ENCODE measurements at regions of chr11 and their contacts with region 1.

Region 1: DNA sequence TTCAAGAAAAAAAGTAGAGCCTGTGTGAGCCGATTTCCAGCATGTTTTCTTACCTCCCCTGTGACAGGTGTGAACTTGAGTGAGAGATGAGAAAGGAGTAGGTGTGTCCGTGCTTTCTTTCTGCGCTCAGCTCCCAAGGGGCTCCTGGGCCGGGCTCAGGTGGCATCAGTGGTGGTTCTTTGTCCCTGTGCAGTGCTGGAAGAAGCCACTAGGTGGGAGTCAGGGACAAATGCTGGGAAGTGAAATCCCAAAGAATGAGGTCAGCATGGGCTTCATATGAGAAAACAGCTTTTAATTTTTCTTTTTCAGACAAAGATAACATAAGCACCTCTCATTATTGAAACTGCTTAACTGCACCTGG is 57.8 kb downstream of the PPFIBP2 start:
- DNase-seq: peak; percentile 46
- H3K4me3 ChIP-seq: no peak overlapping the region
- H3K27ac ChIP-seq: no peak overlapping the region
- H3K27me3 ChIP-seq: peaks cover 5% of the 10 kb centered on the region
- CTCF ChIP-seq: peak; percentile 99

Region 2: GRCh38 chr11:7559398-7560283 is 12.0 kb before region 1 on chr11:
- CTCF ChIA-PET with region 1: interaction called, 38 read pairs
- POLR2A ChIA-PET with region 1: no interaction called
- DNase-seq: no peak
- H3K4me3 ChIP-seq: no peak overlapping the region
- H3K27ac ChIP-seq: no peak overlapping the region
- H3K27me3 ChIP-seq: no peaks in the 10 kb centered on the region
- CTCF ChIP-seq: no peak

Region 3: DNA sequence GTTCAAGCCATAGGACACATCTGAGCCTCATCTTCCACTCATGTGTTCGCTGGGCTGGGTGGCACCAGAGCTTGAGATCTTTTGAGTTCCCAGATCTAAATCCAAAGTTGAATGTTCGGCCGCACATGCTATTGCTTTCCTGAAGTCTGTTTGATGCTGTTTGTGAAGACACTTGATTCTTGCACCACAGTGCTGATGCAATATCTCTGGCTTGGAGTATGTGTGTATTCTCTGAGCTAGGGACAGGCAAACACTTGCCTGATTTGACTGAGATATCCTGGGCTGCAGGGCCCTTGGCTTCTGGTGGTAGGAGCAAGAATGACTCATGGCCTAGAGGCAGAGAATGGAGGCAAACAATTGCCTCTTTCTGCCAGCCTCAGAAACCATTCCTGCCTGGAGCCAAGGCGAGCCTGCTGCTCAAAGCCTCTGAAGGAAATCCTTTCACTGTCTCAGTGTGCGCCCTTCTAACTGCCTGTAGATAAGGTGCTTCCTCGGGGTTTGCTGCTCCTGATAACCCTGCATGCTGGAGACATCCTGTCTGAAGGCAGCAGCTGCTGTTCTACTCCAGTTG is 28.7 kb after region 1 on chr11:
- CTCF ChIA-PET with region 1: interaction called, 24 read pairs
- POLR2A ChIA-PET with region 1: no interaction called
- DNase-seq: peak; percentile 42
- H3K4me3 ChIP-seq: no peak overlapping the region
- H3K27ac ChIP-seq: no peak overlapping the region
- H3K27me3 ChIP-seq: no peaks in the 10 kb centered on the region
- CTCF ChIP-seq: no peak

Region 4: GRCh38 chr11:7642742-7643141 is 71.1 kb after region 1 on chr11:
- CTCF ChIA-PET with region 1: interaction called, 19 read pairs
- POLR2A ChIA-PET with region 1: no interaction called
- DNase-seq: no peak
- H3K4me3 ChIP-seq: no peak overlapping the region
- H3K27ac ChIP-seq: no peak overlapping the region
- H3K27me3 ChIP-seq: no peaks in the 10 kb centered on the region
- CTCF ChIP-seq: no peak

Region 5: GRCh38 chr11:7672960-7673723 is 101.5 kb after region 1 on chr11 and contains the start of gene CYB5R2:
- CTCF ChIA-PET with region 1: interaction called, 90 read pairs
- POLR2A ChIA-PET with region 1: no interaction called
- DNase-seq: no peak
- H3K4me3 ChIP-seq: peak within 1 kb of the TSS; percentile 51
- H3K27ac ChIP-seq: no peak within 1 kb of the TSS
- H3K27me3 ChIP-seq: peaks cover 20% of the 10 kb centered on the region
- CTCF ChIP-seq: no peak
- polyA plus RNA-seq, gene CYB5R2: 7.3 and 7.4 TPM in 2 replicates

Measured in AG04450 (cell line).